Astrocyte of the spinal cord (primary cell): ENCODE measurements at regions of chr1 and their contacts with region 1.

Region 1: DNA sequence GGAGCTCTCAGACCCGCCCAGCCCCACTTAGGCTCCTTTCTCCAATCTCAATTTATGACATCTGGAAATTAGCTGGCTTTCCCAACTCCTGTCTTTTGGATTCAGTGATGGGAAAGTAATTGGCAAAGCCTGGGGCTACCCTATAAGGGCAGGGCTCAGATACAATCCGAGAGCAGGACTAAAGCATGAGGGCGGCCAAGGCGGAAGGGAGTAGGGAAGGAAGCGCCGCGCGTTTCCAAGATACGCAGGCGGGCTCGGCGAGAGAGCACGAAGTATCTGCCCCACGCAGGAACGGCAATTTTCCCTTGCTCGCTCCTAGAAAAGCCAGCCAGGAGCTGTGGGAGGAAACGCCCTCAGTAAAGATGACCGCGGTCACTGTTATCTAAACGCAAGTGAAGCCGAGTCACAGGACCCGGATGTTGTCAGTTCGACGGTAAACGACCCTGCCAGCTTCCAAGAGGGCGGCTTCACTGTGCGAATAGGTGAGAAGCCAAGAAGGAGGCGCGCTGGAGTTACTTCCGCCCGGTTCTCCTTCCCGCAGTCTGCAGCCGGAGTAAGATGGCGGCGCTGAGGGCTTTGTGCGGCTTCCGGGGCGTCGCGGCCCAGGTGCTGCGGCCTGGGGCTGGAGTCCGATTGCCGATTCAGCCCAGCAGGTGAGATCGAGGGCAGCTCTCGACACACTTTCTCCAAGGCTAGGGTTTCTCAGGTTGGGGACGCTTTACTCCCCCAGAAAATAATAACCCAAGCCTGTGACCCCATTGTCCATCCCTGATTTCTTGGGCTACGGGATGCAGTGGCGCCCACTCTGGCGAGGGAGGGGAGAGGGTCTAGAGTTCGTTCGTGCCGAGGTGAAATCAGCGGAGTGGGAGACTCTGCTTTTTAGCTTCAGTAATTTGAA is at the start of gene NDUFS2:
- DNase-seq: peak; percentile 99
- H3K4me3 ChIP-seq: peak within 1 kb of the TSS; percentile 63
- CTCF ChIP-seq: peak; percentile 34

Region 2: DNA sequence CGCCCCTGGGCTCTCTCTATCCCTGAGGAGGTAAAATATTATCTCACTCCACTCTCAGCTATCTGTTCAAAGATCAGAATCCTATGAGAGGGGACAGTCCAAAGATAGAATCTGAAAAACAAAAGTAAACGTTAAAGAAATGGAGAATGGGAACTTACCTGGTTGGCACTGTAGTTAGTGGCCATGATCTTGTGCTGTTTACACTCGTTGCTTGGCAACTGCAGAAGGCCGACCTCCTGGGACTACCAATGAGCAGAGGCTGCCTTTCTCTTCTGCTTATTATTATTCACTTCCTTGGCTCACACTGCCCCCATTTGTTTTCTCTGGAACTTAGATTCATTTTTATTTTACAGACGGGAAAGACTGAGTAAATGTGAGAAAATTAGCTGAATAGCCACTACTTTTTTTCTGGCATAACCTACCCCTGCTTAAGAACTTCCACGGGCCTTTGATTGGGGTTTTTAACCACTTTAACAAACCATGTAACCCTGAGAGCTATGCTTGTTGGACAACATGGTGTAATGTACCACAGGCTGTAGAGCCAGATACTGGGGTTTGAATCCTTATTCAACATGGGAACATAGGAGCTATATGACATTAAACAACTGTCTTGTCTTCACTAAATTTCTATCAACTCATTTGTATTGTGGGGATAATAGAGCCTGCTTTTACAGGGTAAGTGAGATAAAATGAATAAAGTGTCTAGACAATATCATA is 165.8 kb after region 1 on chr1 and contains the start of gene CFAP126:
- in situ Hi-C with region 1: loop called (anchors 25 kb)
- DNase-seq: peak; percentile 78
- H3K4me3 ChIP-seq: no peak within 1 kb of the TSS
- CTCF ChIP-seq: no peak